Heart right ventricle (tissue), 16 donors: ENCODE measurements at regions of chr6 and their contacts with region 1.

Region 1: DNA sequence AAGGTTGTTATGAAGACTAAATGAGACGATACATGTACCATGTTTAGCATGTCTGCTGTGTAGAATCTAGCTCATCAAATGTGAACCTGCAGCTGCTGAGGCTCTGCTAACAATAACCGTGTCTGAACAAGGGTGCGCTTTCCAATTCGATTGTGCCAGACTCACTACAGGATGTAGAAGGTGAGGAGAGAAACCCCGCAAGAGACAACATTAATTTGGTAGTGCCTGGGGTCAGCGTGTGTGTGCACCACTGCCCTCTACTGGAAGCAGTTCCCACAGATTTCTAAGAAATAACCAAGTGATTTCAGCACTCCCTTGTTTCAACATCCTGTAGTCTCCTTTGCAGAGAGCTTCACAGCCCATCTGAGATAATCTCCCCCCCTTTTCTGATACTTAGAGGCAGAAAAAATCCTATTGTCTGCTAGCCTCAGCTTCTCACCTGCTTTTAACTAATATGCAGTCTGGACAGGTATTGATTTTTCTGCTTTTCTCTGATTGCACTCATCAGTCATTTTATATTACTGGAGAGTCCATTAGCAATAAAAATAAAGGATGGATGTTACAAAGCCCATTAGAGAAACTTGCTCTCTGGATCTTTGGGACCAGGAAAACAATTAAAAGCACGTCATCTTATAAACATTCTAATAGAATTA is 96.7 kb upstream of the BACH2 start:
- DNase-seq: peak in 1 of 2 donors; percentile 54
- ATAC-seq: peak in 6 of 8 donors; percentile 49 to 76 (median 63)
- H3K4me3 ChIP-seq: no peak overlapping the region
- H3K27ac ChIP-seq: no peak overlapping the region
- H3K4me1 ChIP-seq: peaks cover 0 to 4% (median 0%) of the 10 kb centered on the region in 9 donors
- H3K27me3 ChIP-seq: peaks cover 0 to 4% (median 0%) of the 10 kb centered on the region in 7 donors
- CTCF ChIP-seq: peak; percentile 68 to 88 (median 78)

Region 2: GRCh38 chr6:89940225-89941027 is 452.9 kb before region 1 on chr6:
- intact Hi-C with region 1: loop called in 4 of 10 experiments (anchors 1 to 10 kb)
- DNase-seq: peak in 1 of 2 donors; percentile 67
- ATAC-seq: peak; percentile 82 to 95 (median 92)
- H3K4me3 ChIP-seq: no peak overlapping the region
- H3K27ac ChIP-seq: no peak overlapping the region
- H3K4me1 ChIP-seq: peaks cover 0 to 12% (median 0%) of the 10 kb centered on the region in 9 donors
- H3K27me3 ChIP-seq: no peaks in the 10 kb centered on the region
- CTCF ChIP-seq: peak; percentile 44 to 85 (median 72)

Region 3: DNA sequence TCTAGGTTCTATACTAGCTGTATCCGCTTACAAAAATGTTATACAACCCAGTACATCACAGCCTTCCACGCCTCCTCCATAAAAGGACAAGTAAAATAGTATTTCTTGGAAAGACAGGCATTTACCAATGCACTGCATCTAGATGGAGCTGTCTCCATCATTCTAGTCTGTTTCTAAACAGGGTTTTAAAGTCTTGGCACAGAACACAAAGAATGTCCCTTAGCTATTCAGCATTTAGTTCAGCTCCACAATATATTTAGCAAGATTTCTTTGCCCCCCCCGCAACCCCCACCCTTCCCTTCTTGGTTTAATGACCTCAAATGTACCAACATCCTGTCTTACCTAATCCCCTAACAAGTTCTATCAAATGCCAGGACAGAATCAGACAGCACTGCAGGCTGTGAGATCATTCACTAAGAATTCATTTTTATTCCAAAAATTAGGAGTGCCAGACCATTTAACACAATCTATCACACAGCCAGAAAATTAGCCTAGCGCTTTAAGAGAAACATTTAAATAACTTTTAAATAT is 295.3 kb before region 1 on chr6:
- intact Hi-C with region 1: loop called in 5 of 10 experiments (anchors 5 to 10 kb)
- DNase-seq: peak; percentile 17 to 39
- ATAC-seq: peak; percentile 86 to 93 (median 89)
- H3K4me3 ChIP-seq: no peak overlapping the region
- H3K27ac ChIP-seq: peak overlapping the region in 9 of 10 donors; percentile 37 to 85 (median 72)
- H3K4me1 ChIP-seq: peaks cover 2 to 45% (median 27%) of the 10 kb centered on the region in 9 donors
- H3K27me3 ChIP-seq: no peaks in the 10 kb centered on the region
- CTCF ChIP-seq: peak in 7 of 9 donors; percentile 25 to 63 (median 51)

Region 4: DNA sequence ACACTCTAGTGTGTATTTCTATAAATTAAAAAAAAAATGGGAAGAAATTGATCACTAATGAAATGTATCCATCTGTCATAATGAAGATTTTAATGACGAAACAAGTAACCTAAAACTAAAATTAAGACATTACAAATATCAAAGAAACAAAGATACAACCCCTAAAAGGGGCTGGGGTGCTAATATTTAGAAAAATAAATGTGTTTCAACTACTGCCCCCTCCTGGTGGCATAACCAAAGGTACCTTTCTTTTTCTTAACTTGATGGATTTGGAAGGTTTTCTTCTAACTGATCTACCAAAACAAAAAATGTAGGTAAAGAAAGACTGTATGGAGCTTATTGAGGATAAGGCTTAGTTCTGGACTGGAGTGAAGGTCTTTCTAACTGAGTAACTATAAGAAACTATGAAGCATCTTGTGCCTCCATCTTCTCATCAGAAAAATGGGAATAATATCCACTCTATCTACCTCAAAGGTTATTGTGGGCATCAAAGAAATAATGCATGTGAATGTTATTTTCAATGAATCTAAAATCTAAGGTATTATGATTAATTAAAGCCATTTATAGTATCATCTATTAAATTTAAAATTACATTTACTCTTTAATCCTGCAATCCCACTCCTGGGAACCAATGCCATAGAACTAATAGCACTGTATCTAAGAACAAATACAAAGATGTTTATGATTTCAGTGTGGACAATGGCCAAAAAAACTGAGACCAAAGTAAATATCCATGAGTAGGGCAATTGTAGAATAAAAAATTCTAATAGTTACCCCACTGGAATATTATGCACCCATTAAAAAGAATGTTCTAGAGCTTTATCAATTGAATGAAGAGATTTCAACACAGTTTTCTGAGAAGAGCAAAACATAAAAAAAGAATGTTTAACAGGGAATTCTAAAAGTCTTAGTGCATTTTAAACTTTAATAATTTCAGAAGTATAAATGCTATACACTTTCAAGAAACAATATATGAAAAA is 213.9 kb before region 1 on chr6:
- intact Hi-C with region 1: loop called in 1 of 10 experiments (anchors 10 kb)
- DNase-seq: no peak
- ATAC-seq: no peak
- H3K4me3 ChIP-seq: no peak overlapping the region
- H3K27ac ChIP-seq: no peak overlapping the region
- H3K4me1 ChIP-seq: peaks cover 0 to 49% (median 37%) of the 10 kb centered on the region in 9 donors
- H3K27me3 ChIP-seq: no peaks in the 10 kb centered on the region
- CTCF ChIP-seq: peak in 8 of 9 donors; percentile 11 to 53 (median 38)

Region 5: DNA sequence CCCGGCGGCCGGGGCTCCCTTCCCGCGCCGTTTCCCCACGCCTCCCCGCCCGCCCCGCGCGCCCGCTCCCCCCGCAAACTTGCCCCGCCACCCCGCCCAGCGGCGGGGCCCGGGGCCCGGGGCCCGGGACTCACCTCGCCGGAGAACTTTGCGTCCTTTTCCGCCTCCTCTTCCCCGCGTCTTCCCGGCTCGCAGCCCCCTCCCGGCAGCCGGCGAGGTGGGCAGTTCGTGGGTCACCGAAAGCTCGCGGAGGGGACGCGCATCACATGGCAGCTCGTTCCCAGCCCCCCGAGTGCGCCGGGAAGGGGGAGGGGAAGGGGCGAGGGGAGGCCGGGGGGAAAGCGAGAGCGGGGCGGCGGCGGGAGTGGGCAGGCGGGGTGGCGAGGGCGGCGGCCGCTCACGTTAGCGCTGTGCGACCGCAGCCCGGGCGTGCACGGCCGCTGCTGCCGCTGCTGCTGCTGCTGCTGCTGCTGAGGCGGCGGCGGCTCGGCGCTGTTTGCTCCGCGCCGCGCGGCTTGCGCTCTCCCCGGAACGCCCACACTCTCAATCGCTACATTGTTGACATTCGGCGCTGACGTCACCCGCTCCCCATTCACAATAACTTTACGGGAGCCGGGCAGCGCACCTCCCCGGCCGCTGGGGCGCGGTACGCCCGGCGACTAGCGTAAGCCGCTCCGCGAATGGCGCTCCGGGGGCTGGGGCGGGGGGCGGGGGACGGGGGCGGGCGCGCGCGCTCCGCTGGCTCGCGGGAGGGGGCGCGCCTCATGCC is 96.8 kb before region 1 on chr6 and contains the start of gene BACH2:
- intact Hi-C with region 1: loop called in 6 of 10 experiments (anchors 5 to 10 kb)
- DNase-seq: peak; percentile 87 to 91
- ATAC-seq: peak; percentile 64 to 87 (median 75)
- H3K4me3 ChIP-seq: peak within 1 kb of the TSS; percentile 48 to 93 (median 80)
- H3K27ac ChIP-seq: peak within 1 kb of the TSS; percentile 74 to 92 (median 82)
- H3K4me1 ChIP-seq: peaks cover 0 to 29% (median 14%) of the 10 kb centered on the region in 9 donors
- H3K27me3 ChIP-seq: peaks cover 0 to 53% (median 0%) of the 10 kb centered on the region in 7 donors
- CTCF ChIP-seq: peak in 4 of 9 donors; percentile 19 to 38 (median 27)
- total RNA-seq, gene BACH2: 1.5 to 4.7 (median 2.8) TPM

Region 6: DNA sequence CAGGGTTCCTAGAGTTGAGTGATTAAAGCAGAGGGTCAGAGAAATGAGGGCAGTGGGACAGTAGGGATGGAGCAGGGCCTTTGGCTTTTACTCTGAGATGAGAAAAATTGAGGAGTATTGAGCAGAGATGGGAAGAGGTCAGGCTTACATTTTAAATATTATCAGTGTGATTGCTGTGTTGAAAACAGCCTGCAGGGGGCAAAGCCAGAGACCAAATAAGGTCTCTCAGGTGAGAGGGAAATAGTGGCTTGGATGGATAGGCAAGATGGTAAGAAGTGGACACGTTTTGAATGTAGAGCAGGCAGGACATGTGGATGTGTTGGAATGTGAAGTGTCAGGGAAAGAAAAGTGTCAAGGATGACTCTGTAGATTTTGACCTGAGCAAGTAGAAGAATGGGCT is 298.5 kb after region 1 on chr6:
- intact Hi-C with region 1: no loop called
- DNase-seq: no peak
- ATAC-seq: no peak
- H3K4me3 ChIP-seq: no peak overlapping the region
- H3K27ac ChIP-seq: no peak overlapping the region
- H3K4me1 ChIP-seq: no peaks in the 10 kb centered on the region
- H3K27me3 ChIP-seq: peaks cover 0 to 3% (median 0%) of the 10 kb centered on the region in 7 donors
- CTCF ChIP-seq: no peak